ENCODE measurements at regions of chr19 and their contacts with region 1.

Region 1: GRCh38 chr19:17358395-17358794 is 18.7 kb downstream of the PLVAP start:
- DNase-seq: no peak
- ATAC-seq: no peak
- H3K4me3 ChIP-seq: no peak overlapping the region
- H3K27ac ChIP-seq: no peak overlapping the region
- H3K4me1 ChIP-seq: no peaks in the 10 kb centered on the region
- H3K27me3 ChIP-seq: no peaks in the 10 kb centered on the region
- CTCF ChIP-seq: no peak

Region 2: GRCh38 chr19:17052439-17053210 is 305.8 kb before region 1 on chr19:
- CTCF ChIA-PET with region 1: interaction called, 10 read pairs
- POLR2A ChIA-PET with region 1: no interaction called
- intact Hi-C with region 1: no loop called
- DNase-seq: peak; percentile 71
- ATAC-seq: no peak
- H3K4me3 ChIP-seq: no peak overlapping the region
- H3K27ac ChIP-seq: no peak overlapping the region
- H3K4me1 ChIP-seq: peaks cover 10% of the 10 kb centered on the region
- H3K27me3 ChIP-seq: no peaks in the 10 kb centered on the region
- CTCF ChIP-seq: peak; percentile 75

Region 3: GRCh38 chr19:17329741-17330535 is 28.5 kb before region 1 on chr19:
- CTCF ChIA-PET with region 1: interaction called, 11 read pairs
- POLR2A ChIA-PET with region 1: no interaction called
- intact Hi-C with region 1: no loop called
- DNase-seq: no peak
- ATAC-seq: no peak
- H3K4me3 ChIP-seq: no peak overlapping the region
- H3K27ac ChIP-seq: no peak overlapping the region
- H3K4me1 ChIP-seq: peaks cover 1% of the 10 kb centered on the region; the same call in 1 of the 2 replicates
- H3K27me3 ChIP-seq: no peaks in the 10 kb centered on the region
- CTCF ChIP-seq: no peak